K562 (cell line): ENCODE measurements at regions of chr3 and their contacts with region 1.

Region 1: GRCh38 chr3:119676771-119677640 is at the start of gene COX17:
- DNase-seq: peak; percentile 93 to 94 (median 94)
- ATAC-seq: peak; percentile 91
- H3K4me3 ChIP-seq: peak within 1 kb of the TSS; percentile 58
- H3K27ac ChIP-seq: peak within 1 kb of the TSS; percentile 94
- H3K4me1 ChIP-seq: peaks cover 0 to 11% of the 10 kb centered on the region in 2 experiments; a peak in 3 of 5 replicates
- H3K27me3 ChIP-seq: no peaks in the 10 kb centered on the region
- CTCF ChIP-seq: 0 out of 6 replicates have a peak, but pooled peaks of 1 of the 3 experiments have one; percentile 5
- EP300 ChIP-seq: no peak
- POLR2A ChIP-seq: peak; percentile 89
- RAD21 ChIP-seq: peak; percentile 7 to 28; a peak in 3 of 4 replicates
- polyA plus RNA-seq, gene COX17: 147 to 167 TPM

Region 2: GRCh38 chr3:118587037-118587741 is 1089.8 kb before region 1 on chr3:
- CTCF ChIA-PET with region 1: no interaction called
- POLR2A ChIA-PET with region 1: no interaction called
- in situ Hi-C with region 1: no loop called
- intact Hi-C with region 1: no loop called
- DNase-seq: no peak
- ATAC-seq: no peak
- H3K4me3 ChIP-seq: no peak overlapping the region
- H3K27ac ChIP-seq: no peak overlapping the region
- H3K4me1 ChIP-seq: no peaks in the 10 kb centered on the region
- H3K27me3 ChIP-seq: no peaks in the 10 kb centered on the region
- CTCF ChIP-seq: no peak
- EP300 ChIP-seq: no peak
- POLR2A ChIP-seq: no peak
- RAD21 ChIP-seq: no peak

Region 3: DNA sequence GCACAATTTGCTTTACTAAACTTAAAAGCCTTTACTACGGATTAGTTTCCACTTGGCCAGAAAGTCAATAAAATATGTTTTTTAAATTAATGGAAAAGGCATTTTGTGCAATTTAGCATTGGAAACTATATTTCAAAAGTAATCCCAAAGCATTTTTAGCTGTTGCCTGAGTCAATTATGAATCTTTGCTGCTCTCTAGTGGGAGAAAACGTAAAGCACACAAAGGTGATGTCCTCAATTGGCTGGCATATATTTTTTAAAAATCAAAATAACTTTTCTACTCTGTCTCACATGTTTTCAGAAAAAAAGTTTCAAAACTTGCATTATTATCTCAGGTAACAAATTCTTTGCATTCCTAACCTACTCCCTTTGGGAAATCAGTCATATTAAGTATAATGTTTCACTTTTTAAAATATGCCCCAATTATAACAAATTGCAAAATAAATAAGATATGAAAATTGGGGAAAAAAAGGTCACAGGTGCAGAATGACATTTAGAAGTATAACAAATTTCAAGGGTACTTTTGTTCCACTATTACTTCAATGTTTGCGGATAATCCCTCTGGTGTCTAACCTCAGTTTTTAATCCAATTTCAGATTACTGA is 578.3 kb before region 1 on chr3:
- CTCF ChIA-PET with region 1: no interaction called
- POLR2A ChIA-PET with region 1: no interaction called
- in situ Hi-C with region 1: no loop called
- intact Hi-C with region 1: loop called (anchors 10 kb)
- DNase-seq: peak; percentile 17 to 44 (median 21)
- ATAC-seq: peak; percentile 64; the same call in 2 of the 3 replicates
- H3K4me3 ChIP-seq: no peak overlapping the region
- H3K27ac ChIP-seq: no peak overlapping the region
- H3K4me1 ChIP-seq: no peaks in the 10 kb centered on the region
- H3K27me3 ChIP-seq: no peaks in the 10 kb centered on the region
- CTCF ChIP-seq: peak; percentile 47 to 73 (median 52); a peak in 4 of 6 replicates
- EP300 ChIP-seq: no peak
- POLR2A ChIP-seq: no peak
- RAD21 ChIP-seq: peak; percentile 93 to 94

Region 4: DNA sequence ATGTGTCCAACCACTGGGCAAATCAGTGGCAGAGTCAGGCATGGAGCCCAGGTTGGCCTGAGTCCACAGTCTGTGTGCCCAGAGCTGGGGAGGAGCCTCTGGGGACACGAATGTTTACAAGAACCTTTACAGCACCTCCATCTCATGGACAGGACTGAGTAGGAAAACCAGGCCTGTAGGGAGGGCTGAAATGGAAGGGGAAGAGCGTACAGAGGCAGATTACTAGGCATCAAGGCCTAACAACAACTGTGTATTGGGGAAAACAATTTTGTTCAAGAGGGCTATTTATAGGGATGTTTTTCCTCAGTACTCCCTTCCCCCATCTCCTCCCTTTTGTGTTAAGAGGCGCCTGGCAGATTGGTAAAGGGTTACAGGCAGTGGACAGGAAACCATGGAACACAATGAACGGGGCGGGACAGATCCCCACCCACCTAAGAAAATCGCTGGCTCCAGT is 397.9 kb before region 1 on chr3:
- CTCF ChIA-PET with region 1: interaction called, 3 read pairs
- POLR2A ChIA-PET with region 1: no interaction called
- in situ Hi-C with region 1: no loop called
- intact Hi-C with region 1: loop called (anchors 10 kb)
- DNase-seq: no peak
- ATAC-seq: no peak
- H3K4me3 ChIP-seq: no peak overlapping the region
- H3K27ac ChIP-seq: no peak overlapping the region
- H3K4me1 ChIP-seq: no peaks in the 10 kb centered on the region
- H3K27me3 ChIP-seq: peaks cover 0 to 5% of the 10 kb centered on the region in 2 experiments; a peak in 3 of 5 replicates
- CTCF ChIP-seq: no peak
- EP300 ChIP-seq: no peak
- POLR2A ChIP-seq: no peak
- RAD21 ChIP-seq: no peak

Region 5: GRCh38 chr3:119498186-119498987 is 178.6 kb before region 1 on chr3 and contains the start of gene TIMMDC1:
- CTCF ChIA-PET with region 1: no interaction called
- POLR2A ChIA-PET with region 1: interaction called, 3 read pairs
- in situ Hi-C with region 1: no loop called
- intact Hi-C with region 1: loop called (anchors 5 kb)
- DNase-seq: peak; percentile 90 to 96 (median 92)
- ATAC-seq: peak; percentile 91
- H3K4me3 ChIP-seq: peak within 1 kb of the TSS; percentile 70
- H3K27ac ChIP-seq: peak within 1 kb of the TSS; percentile 94
- H3K4me1 ChIP-seq: no peaks in the 10 kb centered on the region; a peak in 1 of 5 replicates
- H3K27me3 ChIP-seq: no peaks in the 10 kb centered on the region
- CTCF ChIP-seq: no peak
- EP300 ChIP-seq: no peak
- POLR2A ChIP-seq: peak; percentile 90
- RAD21 ChIP-seq: no peak
- polyA plus RNA-seq, gene TIMMDC1: 224 to 226 TPM

Region 6: DNA sequence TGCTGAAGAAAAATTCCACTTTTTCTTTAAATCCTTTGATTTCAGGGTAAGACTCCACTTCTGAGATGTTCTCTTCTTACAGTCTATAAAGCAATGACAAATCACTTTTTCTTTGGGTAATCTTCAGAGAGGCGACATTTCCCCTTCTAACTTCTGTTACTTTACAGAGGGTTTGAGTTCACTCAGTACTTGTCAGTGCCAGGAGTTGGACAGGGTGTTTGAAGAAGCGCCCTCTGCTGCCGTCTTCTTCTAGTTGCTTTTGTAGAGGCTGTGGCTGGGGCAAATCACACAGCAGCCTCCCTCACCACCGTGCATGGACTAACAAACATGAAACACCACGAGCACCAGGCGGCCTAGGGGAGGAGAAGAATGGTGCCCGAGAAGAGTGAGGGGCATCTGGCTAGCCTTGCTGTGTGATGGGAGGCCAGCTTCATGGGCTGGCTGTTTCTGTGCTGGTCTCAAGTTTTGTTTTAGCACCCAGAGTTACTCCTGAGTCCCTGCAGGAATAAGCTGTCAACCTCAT is 117.5 kb before region 1 on chr3 and contains the start of gene CD80:
- CTCF ChIA-PET with region 1: no interaction called
- POLR2A ChIA-PET with region 1: no interaction called
- in situ Hi-C with region 1: no loop called
- intact Hi-C with region 1: loop called (anchors 5 kb)
- DNase-seq: peak; percentile 20 to 83 (median 43)
- ATAC-seq: peak; percentile 96
- H3K4me3 ChIP-seq: peak within 1 kb of the TSS; percentile 37
- H3K27ac ChIP-seq: peak within 1 kb of the TSS; percentile 73
- H3K4me1 ChIP-seq: peaks cover 0 to 12% of the 10 kb centered on the region in 2 experiments; a peak in 3 of 5 replicates
- H3K27me3 ChIP-seq: no peaks in the 10 kb centered on the region
- CTCF ChIP-seq: peak; percentile 56 to 72 (median 62); a peak in 5 of 6 replicates
- EP300 ChIP-seq: no peak
- POLR2A ChIP-seq: no peak
- RAD21 ChIP-seq: peak; percentile 54 to 67
- polyA plus RNA-seq, gene CD80: 5.7 to 6.6 TPM

Region 7: GRCh38 chr3:119608405-119609000 is 68.5 kb before region 1 on chr3:
- CTCF ChIA-PET with region 1: no interaction called
- POLR2A ChIA-PET with region 1: no interaction called
- in situ Hi-C with region 1: no loop called
- intact Hi-C with region 1: no loop called
- DNase-seq: no peak
- ATAC-seq: no peak
- H3K4me3 ChIP-seq: no peak overlapping the region
- H3K27ac ChIP-seq: no peak overlapping the region
- H3K4me1 ChIP-seq: no peaks in the 10 kb centered on the region; a peak in 1 of 5 replicates
- H3K27me3 ChIP-seq: peaks cover 0 to 10% of the 10 kb centered on the region in 2 experiments; a peak in 2 of 5 replicates
- CTCF ChIP-seq: no peak
- EP300 ChIP-seq: no peak
- POLR2A ChIP-seq: no peak
- RAD21 ChIP-seq: no peak

Region 8: DNA sequence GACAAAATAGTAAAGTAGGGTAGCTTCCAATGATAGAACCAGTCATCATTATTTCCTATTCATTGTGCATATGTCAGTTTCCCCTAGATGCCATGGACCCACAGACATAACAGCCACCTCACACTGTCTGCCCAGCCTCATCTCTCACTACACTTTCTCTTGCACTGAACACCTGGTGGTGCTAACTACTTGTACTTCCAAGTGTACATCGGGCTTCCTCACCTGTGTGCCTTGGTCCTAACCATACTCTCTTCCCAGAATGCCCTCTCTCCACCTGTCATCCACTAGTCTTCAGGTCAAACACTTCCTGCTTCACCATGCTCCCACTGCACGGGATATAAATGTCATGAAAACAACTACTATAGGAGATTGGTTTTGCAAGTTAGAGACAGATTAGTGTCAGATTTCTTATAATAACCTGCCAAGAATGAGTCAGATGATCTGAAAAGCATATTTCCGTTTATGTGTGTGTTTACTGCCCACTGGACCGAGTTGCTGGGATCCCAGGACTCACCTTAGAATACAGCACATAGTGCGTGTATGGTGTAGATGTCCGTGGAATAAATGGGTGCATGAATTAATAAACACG is 58.0 kb before region 1 on chr3:
- CTCF ChIA-PET with region 1: no interaction called
- POLR2A ChIA-PET with region 1: no interaction called
- in situ Hi-C with region 1: no loop called
- intact Hi-C with region 1: loop called (anchors 5 kb)
- DNase-seq: no peak
- ATAC-seq: no peak
- H3K4me3 ChIP-seq: no peak overlapping the region
- H3K27ac ChIP-seq: no peak overlapping the region
- H3K4me1 ChIP-seq: peaks cover 0 to 8% of the 10 kb centered on the region in 2 experiments; a peak in 3 of 5 replicates
- H3K27me3 ChIP-seq: no peaks in the 10 kb centered on the region
- CTCF ChIP-seq: no peak
- EP300 ChIP-seq: no peak
- POLR2A ChIP-seq: no peak
- RAD21 ChIP-seq: peak in 1 of 2 experiments; percentile 27; a peak in 2 of 4 replicates

Region 9: GRCh38 chr3:119937229-119937628 is 260.2 kb after region 1 on chr3:
- CTCF ChIA-PET with region 1: no interaction called
- POLR2A ChIA-PET with region 1: no interaction called
- in situ Hi-C with region 1: no loop called
- intact Hi-C with region 1: no loop called
- DNase-seq: peak in 2 of 4 experiments; percentile 9 to 29
- ATAC-seq: peak; percentile 83
- H3K4me3 ChIP-seq: no peak overlapping the region
- H3K27ac ChIP-seq: no peak overlapping the region; the same call in 2 of the 3 replicates
- H3K4me1 ChIP-seq: peaks cover 0 to 3% of the 10 kb centered on the region in 2 experiments; a peak in 2 of 5 replicates
- H3K27me3 ChIP-seq: no peaks in the 10 kb centered on the region
- CTCF ChIP-seq: no peak
- EP300 ChIP-seq: no peak
- POLR2A ChIP-seq: no peak
- RAD21 ChIP-seq: no peak